A549 (cell line): ENCODE measurements at regions of chr15 and their contacts with region 1.

Region 1: DNA sequence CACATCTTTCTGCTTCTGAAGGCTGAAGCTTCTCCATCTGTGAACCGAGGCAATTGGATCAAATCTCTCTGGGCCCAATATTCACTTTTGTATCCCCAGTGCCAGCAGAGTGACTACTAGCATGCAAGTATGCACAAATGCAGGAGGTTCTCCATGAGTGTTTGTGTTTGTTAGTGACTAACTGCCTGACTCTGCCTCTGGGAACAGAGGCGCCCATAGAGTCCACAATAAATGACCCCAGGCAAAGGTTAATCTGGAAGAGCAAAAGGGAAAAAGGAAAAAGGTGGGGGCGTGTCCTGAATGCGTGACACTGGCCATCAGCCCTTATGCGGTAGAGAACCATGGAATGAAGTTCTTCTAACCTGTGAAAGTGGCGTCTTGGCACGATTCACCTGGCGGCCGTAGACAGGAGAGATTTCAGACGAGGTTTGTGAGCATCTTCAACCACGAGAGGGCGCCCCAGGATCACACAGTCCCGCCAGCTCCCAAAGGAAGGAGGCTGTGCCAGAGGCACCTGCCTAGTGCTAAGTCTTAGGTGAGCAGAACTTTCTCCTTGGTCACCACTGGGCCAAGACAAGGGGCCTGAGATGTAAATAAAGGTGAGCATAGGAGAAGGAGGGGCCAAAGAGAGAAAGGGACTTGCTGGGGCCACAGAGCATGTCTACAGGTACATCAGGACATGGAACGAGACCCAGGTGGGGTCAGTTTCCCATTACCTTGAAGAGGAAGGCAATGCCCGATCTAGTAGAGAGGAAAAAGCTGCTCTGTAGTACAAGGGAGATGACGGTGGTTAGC is 44.2 kb downstream of the RBPMS2 start:
- DNase-seq: peak; percentile 77 to 83
- ATAC-seq: peak; percentile 88 to 91
- H3K4me3 ChIP-seq: no peak overlapping the region
- H3K27ac ChIP-seq: no peak overlapping the region
- H3K4me1 ChIP-seq: peaks cover 9% of the 10 kb centered on the region
- CTCF ChIP-seq: peak; percentile 99
- EP300 ChIP-seq: no peak
- POLR2A ChIP-seq: no peak
- RAD21 ChIP-seq: peak; percentile 99 to 100

Region 2: GRCh38 chr15:64430000-64430735 is 301.0 kb before region 1 on chr15:
- CTCF ChIA-PET with region 1: interaction called, 10 read pairs
- POLR2A ChIA-PET with region 1: no interaction called
- DNase-seq: no peak
- ATAC-seq: no peak
- H3K4me3 ChIP-seq: no peak overlapping the region
- H3K27ac ChIP-seq: no peak overlapping the region
- H3K4me1 ChIP-seq: 0 out of 3 replicates have a peak, but pooled peaks cover 6% of the 10 kb centered on the region
- CTCF ChIP-seq: no peak
- EP300 ChIP-seq: no peak
- POLR2A ChIP-seq: no peak
- RAD21 ChIP-seq: no peak

Region 3: GRCh38 chr15:64717735-64718495 is 13.3 kb before region 1 on chr15:
- CTCF ChIA-PET with region 1: interaction called, 121 read pairs
- POLR2A ChIA-PET with region 1: no interaction called
- DNase-seq: no peak
- ATAC-seq: 0 out of 6 replicates have a peak, but pooled peaks have one; percentile 20 to 21
- H3K4me3 ChIP-seq: no peak overlapping the region
- H3K27ac ChIP-seq: no peak overlapping the region
- H3K4me1 ChIP-seq: 0 out of 3 replicates have a peak, but pooled peaks cover 3% of the 10 kb centered on the region
- CTCF ChIP-seq: no peak
- EP300 ChIP-seq: no peak
- POLR2A ChIP-seq: no peak
- RAD21 ChIP-seq: no peak

Region 4: GRCh38 chr15:64761156-64761555 is 29.9 kb after region 1 on chr15:
- CTCF ChIA-PET with region 1: interaction called, 16 read pairs
- POLR2A ChIA-PET with region 1: no interaction called
- DNase-seq: no peak
- ATAC-seq: no peak
- H3K4me3 ChIP-seq: no peak overlapping the region
- H3K27ac ChIP-seq: no peak overlapping the region
- H3K4me1 ChIP-seq: no peaks in the 10 kb centered on the region
- CTCF ChIP-seq: no peak
- EP300 ChIP-seq: no peak
- POLR2A ChIP-seq: no peak
- RAD21 ChIP-seq: no peak

Region 5: DNA sequence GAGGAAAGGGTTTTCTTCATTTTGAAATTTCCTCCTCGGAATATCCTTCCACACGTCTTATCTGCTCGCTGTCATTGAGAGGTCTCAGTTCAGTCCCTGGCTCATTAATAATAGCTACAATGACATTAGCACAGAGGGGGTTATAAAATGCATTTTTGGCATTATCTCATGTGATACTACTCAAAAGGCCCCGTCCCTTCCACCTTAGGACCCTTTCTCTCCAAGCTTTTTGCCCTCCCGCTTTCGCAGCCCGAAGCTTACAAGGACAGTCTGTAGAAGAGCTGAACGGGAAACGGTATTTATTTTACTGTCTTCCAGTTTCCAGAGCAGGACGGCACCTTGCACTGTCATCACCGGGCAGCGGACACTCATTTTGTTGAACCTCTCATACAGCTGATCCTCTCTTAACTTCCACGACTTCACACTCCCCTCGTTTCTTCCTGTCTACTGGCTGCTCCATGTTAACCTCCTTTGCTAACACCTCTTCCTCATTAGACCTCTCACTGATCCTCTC is 104.9 kb after region 1 on chr15:
- CTCF ChIA-PET with region 1: interaction called, 40 read pairs
- POLR2A ChIA-PET with region 1: interaction called, 9 read pairs
- DNase-seq: no peak
- ATAC-seq: peak; percentile 17; a peak in 4 of 6 replicates
- H3K4me3 ChIP-seq: no peak overlapping the region
- H3K27ac ChIP-seq: peak overlapping the region; percentile 8 to 61; a peak in 4 of 6 replicates
- H3K4me1 ChIP-seq: peaks cover 15% of the 10 kb centered on the region
- CTCF ChIP-seq: no peak; the same call in 2 of the 3 replicates
- EP300 ChIP-seq: no peak
- POLR2A ChIP-seq: no peak
- RAD21 ChIP-seq: no peak

Region 6: DNA sequence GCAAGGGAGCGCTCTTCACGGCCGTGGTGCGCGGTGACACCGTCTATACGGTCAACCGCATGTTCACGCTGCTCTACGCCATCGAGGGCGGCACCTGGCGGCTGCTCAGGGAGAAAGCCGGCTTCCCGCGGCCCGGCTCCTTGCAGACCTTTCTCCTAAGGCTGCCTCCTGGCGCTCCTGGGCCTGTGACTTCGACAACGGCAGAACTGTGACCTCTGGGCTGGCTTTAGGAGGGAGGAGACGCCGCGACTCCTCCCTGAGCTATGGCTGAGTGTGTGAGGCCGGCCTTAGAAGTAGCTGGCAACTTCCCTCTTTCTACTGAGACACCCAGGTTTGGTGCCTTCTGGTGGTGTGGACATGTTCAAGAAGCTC is 346.8 kb after region 1 on chr15:
- CTCF ChIA-PET with region 1: interaction called, 16 read pairs
- POLR2A ChIA-PET with region 1: no interaction called
- DNase-seq: peak; percentile 91 to 92
- ATAC-seq: peak; percentile 93 to 98
- H3K4me3 ChIP-seq: no peak overlapping the region
- H3K27ac ChIP-seq: peak overlapping the region; percentile 17 to 65; a peak in 5 of 6 replicates
- H3K4me1 ChIP-seq: peaks cover 7% of the 10 kb centered on the region; the same call in 1 of the 3 replicates
- CTCF ChIP-seq: peak; percentile 93
- EP300 ChIP-seq: no peak
- POLR2A ChIP-seq: no peak
- RAD21 ChIP-seq: peak; percentile 84 to 95